ENCODE measurements at regions of chr3 and their contacts with region 1.

Region 1: GRCh38 chr3:195106418-195106906 is 164.5 kb downstream of the XXYLT1 start:
- DNase-seq: peak; percentile 74
- ATAC-seq: peak; percentile 96
- H3K4me3 Mint-ChIP-seq: peak overlapping the region; percentile 48
- H3K27ac Mint-ChIP-seq: peak overlapping the region; percentile 23
- H3K4me1 Mint-ChIP-seq: peaks cover 5% of the 10 kb centered on the region
- H3K27me3 Mint-ChIP-seq: no peaks in the 10 kb centered on the region
- CTCF ChIP-seq: peak; percentile 99

Region 2: GRCh38 chr3:194671900-194672808 is 434.3 kb before region 1 on chr3 and contains the start of gene LSG1:
- CTCF ChIA-PET with region 1: interaction called, 17 read pairs
- POLR2A ChIA-PET with region 1: no interaction called
- intact Hi-C with region 1: no loop called
- DNase-seq: peak; percentile 94
- ATAC-seq: peak; percentile 88
- H3K4me3 Mint-ChIP-seq: peak within 1 kb of the TSS; percentile 94
- H3K27ac Mint-ChIP-seq: peak within 1 kb of the TSS; percentile 98
- H3K4me1 Mint-ChIP-seq: peaks cover 59% of the 10 kb centered on the region
- H3K27me3 Mint-ChIP-seq: peaks cover 2% of the 10 kb centered on the region
- CTCF ChIP-seq: no peak
- total RNA-seq, gene LSG1: 36.5 to 41.3 TPM

Region 3: GRCh38 chr3:194682694-194683310 is 423.7 kb before region 1 on chr3:
- CTCF ChIA-PET with region 1: interaction called, 35 read pairs
- POLR2A ChIA-PET with region 1: no interaction called
- intact Hi-C with region 1: loop called (anchors 5 kb)
- DNase-seq: peak; percentile 84
- ATAC-seq: peak; percentile 68
- H3K4me3 Mint-ChIP-seq: no peak overlapping the region
- H3K27ac Mint-ChIP-seq: no peak overlapping the region
- H3K4me1 Mint-ChIP-seq: peaks cover 34% of the 10 kb centered on the region
- H3K27me3 Mint-ChIP-seq: peaks cover 16% of the 10 kb centered on the region
- CTCF ChIP-seq: peak; percentile 85

Region 4: GRCh38 chr3:195116407-195117185 is 10.1 kb after region 1 on chr3:
- CTCF ChIA-PET with region 1: interaction called, 12 read pairs
- POLR2A ChIA-PET with region 1: no interaction called
- intact Hi-C with region 1: no loop called
- DNase-seq: no peak
- ATAC-seq: no peak
- H3K4me3 Mint-ChIP-seq: no peak overlapping the region
- H3K27ac Mint-ChIP-seq: no peak overlapping the region
- H3K4me1 Mint-ChIP-seq: peaks cover 7% of the 10 kb centered on the region
- H3K27me3 Mint-ChIP-seq: no peaks in the 10 kb centered on the region
- CTCF ChIP-seq: no peak